ENCODE measurements at regions of chr3 and their contacts with region 1.

Region 1: GRCh38 chr3:187738331-187739093 is 6.8 kb downstream of the BCL6 start:
- DNase-seq: peak; percentile 85 to 91
- ATAC-seq: peak; percentile 50 to 56 (median 54)
- H3K4me3 ChIP-seq: peak overlapping the region; percentile 93
- H3K27ac ChIP-seq: peak overlapping the region; percentile 100
- H3K4me1 ChIP-seq: peaks cover 28% of the 10 kb centered on the region
- H3K27me3 ChIP-seq: no peaks in the 10 kb centered on the region
- CTCF ChIP-seq: peak; percentile 64

Region 2: DNA sequence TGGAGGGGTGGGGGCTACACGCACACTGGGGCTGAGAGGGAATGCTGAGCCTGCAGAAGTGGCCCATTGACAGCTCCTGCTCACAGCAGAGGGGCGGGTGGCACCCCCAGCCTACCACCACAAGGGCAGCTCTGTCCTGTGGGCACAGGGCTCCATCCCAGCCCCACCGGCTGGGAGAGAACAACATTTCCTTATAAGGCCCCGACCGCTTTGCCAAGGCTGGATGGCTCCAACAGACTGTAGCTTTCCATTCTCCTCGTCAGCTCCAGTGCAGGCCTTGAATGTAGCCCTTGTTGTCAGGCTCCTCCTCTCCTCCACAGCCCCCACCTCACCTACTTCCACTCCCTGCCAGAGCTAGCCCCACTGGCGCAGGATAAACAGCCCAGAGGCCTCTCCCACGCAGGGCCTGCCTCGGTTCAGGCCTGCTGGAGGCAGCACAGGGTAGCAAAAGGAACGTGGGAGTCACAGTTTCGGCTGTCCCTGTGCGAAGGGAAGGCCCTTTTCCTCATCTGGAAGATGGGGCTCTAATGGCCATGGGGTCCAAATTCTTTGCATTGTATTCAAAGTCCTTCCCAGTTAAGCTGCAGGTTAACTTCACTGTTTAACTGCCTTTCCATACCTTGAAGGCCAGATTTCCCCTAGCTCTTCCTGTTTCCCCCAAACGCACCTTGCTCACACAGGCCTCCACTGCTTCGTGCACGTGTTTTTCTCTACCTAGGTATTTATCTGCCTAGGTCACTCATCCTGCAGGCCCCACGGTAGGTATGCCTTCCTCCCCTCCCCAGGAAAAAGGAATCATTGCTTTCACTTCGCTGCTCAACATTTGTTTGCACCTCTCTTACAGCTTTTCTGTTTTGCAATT is 313.9 kb after region 1 on chr3:
- intact Hi-C with region 1: loop called in 1 of 2 experiments (anchors 5 kb)
- DNase-seq: peak; percentile 78 to 91
- ATAC-seq: peak; percentile 80 to 91 (median 86)
- H3K4me3 ChIP-seq: no peak overlapping the region
- H3K27ac ChIP-seq: peak overlapping the region; percentile 65
- H3K4me1 ChIP-seq: peaks cover 19% of the 10 kb centered on the region
- H3K27me3 ChIP-seq: no peaks in the 10 kb centered on the region
- CTCF ChIP-seq: no peak

Region 3: GRCh38 chr3:188244395-188244861 is 505.9 kb after region 1 on chr3:
- intact Hi-C with region 1: loop called in 1 of 2 experiments (anchors 5 kb)
- DNase-seq: no peak
- ATAC-seq: no peak
- H3K4me3 ChIP-seq: no peak overlapping the region
- H3K27ac ChIP-seq: no peak overlapping the region
- H3K4me1 ChIP-seq: peaks cover 56% of the 10 kb centered on the region
- H3K27me3 ChIP-seq: no peaks in the 10 kb centered on the region
- CTCF ChIP-seq: no peak

Region 4: GRCh38 chr3:188348435-188349244 is 610.1 kb after region 1 on chr3:
- intact Hi-C with region 1: loop called in 1 of 2 experiments (anchors 5 kb)
- DNase-seq: peak; percentile 77 to 81
- ATAC-seq: peak in 3 of 4 donors; percentile 32 to 61 (median 47)
- H3K4me3 ChIP-seq: no peak overlapping the region
- H3K27ac ChIP-seq: peak overlapping the region; percentile 72
- H3K4me1 ChIP-seq: peaks cover 51% of the 10 kb centered on the region
- H3K27me3 ChIP-seq: no peaks in the 10 kb centered on the region
- CTCF ChIP-seq: no peak

Region 5: DNA sequence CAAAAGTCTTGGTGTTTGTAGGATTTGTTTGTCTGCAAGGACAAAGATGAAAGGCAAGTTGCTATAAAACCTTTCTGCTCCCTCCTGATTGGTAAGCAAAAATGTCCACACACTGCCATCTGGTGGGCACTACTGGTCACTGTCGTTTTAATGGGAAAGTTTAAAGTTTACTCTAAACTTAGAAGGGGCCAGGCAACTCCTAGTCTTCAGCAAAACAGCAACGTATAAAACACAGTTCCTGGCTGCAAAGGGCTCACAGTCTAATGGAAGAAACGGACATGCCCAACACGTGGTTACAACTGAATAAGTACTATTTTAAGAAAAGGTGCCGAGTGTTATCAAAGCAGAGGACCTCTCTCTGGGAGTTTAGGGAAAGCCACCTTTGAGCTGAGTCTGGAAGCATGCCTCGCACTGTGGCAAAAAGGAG is 1409.6 kb after region 1 on chr3:
- intact Hi-C with region 1: loop called (anchors 2 to 10 kb)
- DNase-seq: peak; percentile 33 to 64
- ATAC-seq: peak; percentile 76 to 89 (median 80)
- H3K4me3 ChIP-seq: no peak overlapping the region
- H3K27ac ChIP-seq: peak overlapping the region; percentile 48
- H3K4me1 ChIP-seq: peaks cover 26% of the 10 kb centered on the region
- H3K27me3 ChIP-seq: no peaks in the 10 kb centered on the region
- CTCF ChIP-seq: peak; percentile 78